ENCODE measurements at regions of chr10 and their contacts with region 1.

Region 1: GRCh38 chr10:89502556-89502955 is 32.8 kb downstream of the SLC16A12 start:
- DNase-seq: peak; percentile 85
- ATAC-seq: peak; percentile 40; the same call in 1 of the 2 replicates
- H3K4me3 ChIP-seq: no peak overlapping the region
- H3K27ac ChIP-seq: no peak overlapping the region
- H3K4me1 ChIP-seq: no peaks in the 10 kb centered on the region
- H3K27me3 ChIP-seq: no peaks in the 10 kb centered on the region
- CTCF ChIP-seq: no peak
- POLR2A ChIP-seq: no peak
- RAD21 ChIP-seq: no peak

Region 2: DNA sequence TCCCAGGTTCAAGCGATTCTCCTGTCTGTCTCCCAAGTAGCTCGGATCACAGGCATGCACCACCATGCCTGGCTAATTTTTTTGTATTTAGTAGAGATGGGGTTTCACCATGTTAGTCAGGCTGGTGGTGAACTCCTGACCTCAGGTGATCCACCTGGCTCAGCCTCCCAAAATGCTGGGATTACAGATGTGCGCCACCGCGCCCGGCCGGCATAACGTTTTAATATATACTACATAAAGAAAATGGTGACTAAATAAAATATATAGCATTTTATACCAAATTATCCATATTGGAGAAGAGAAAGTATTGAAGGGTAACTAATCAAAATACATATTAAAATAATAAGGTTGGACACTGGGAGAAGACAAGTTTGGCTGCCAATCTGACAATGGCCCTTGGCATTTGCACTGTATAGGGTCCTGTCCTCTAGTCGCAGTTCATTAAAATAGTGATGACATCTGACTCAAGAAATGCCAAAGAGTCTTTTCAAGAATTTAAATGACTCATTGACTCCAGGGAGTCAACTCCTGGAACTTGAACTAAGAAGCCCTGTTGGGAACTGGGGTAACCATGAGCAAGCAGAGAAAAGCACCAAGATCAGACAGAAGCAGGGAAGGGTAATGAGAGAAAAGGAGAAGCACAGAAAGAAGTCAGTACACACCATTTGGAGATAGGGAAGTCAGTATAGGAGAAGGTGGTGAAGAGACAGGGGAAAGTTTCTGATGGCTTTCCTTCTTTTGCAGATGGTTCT is 386.5 kb before region 1 on chr10:
- CTCF ChIA-PET with region 1: no interaction called
- POLR2A ChIA-PET with region 1: no interaction called
- dilution Hi-C with region 1: no loop called
- in situ Hi-C with region 1: no loop called
- intact Hi-C with region 1: no loop called
- DNase-seq: peak; percentile 58
- ATAC-seq: peak; percentile 60
- H3K4me3 ChIP-seq: no peak overlapping the region
- H3K27ac ChIP-seq: no peak overlapping the region
- H3K4me1 ChIP-seq: peaks cover 7% of the 10 kb centered on the region
- H3K27me3 ChIP-seq: no peaks in the 10 kb centered on the region
- CTCF ChIP-seq: no peak
- POLR2A ChIP-seq: no peak
- RAD21 ChIP-seq: no peak

Region 3: GRCh38 chr10:89490596-89491335 is 11.8 kb before region 1 on chr10:
- CTCF ChIA-PET with region 1: no interaction called
- POLR2A ChIA-PET with region 1: no interaction called
- dilution Hi-C with region 1: no loop called
- in situ Hi-C with region 1: no loop called
- intact Hi-C with region 1: loop called (anchors 1 kb)
- DNase-seq: no peak
- ATAC-seq: no peak
- H3K4me3 ChIP-seq: no peak overlapping the region
- H3K27ac ChIP-seq: no peak overlapping the region
- H3K4me1 ChIP-seq: no peaks in the 10 kb centered on the region
- H3K27me3 ChIP-seq: no peaks in the 10 kb centered on the region
- CTCF ChIP-seq: no peak
- POLR2A ChIP-seq: no peak
- RAD21 ChIP-seq: no peak